PC-9 (cell line): ENCODE measurements at regions of chr11 and their contacts with region 1.

Region 1: DNA sequence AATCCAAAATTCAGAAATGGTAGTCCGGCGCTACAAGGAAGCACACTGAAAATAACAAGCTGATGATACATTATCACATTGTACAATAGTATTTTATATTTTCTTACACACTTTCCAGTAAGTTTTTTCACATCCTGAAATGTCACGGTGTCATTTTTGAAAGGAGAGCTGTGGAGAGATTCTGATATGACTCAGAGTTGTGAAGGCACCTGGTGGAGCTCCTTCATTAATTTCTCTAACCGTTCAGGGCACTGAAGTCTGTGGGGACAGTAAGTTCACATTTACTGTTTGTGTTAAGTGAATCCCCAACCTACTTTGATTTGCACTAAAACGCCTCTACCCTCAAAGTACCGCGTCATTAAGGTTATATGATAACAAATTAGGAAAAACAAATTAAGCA is 13.3 kb downstream of the LDHAL6A start:
- DNase-seq: no peak
- H3K4me3 ChIP-seq: no peak overlapping the region
- H3K27ac ChIP-seq: no peak overlapping the region
- H3K4me1 ChIP-seq: no peaks in the 10 kb centered on the region
- H3K27me3 ChIP-seq: no peaks in the 10 kb centered on the region
- CTCF ChIP-seq: no peak

Region 2: DNA sequence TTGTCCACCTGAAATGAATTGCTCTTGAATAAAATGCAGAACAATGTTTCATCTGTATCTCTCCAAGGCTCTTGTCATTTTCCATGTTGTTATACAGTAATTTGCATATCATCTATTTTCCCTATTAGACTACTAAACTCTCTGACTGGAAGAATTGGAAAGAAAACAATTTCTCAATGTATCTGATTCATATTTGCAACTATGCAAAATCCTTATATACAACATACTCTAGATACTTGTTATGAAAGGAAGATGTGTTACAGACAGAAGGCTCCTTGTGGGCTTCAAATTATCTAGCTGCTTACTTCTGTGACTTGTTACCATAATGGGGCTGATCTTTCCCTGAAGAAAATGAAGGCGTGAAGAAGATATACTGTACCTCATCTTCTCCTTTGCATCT is 446.5 kb before region 1 on chr11:
- CTCF ChIA-PET with region 1: no interaction called
- POLR2A ChIA-PET with region 1: no interaction called
- intact Hi-C with region 1: no loop called
- DNase-seq: no peak
- H3K4me3 ChIP-seq: no peak overlapping the region
- H3K27ac ChIP-seq: no peak overlapping the region
- H3K4me1 ChIP-seq: no peaks in the 10 kb centered on the region
- H3K27me3 ChIP-seq: 0 out of 2 replicates have a peak, but pooled peaks cover 4% of the 10 kb centered on the region
- CTCF ChIP-seq: no peak

Region 3: DNA sequence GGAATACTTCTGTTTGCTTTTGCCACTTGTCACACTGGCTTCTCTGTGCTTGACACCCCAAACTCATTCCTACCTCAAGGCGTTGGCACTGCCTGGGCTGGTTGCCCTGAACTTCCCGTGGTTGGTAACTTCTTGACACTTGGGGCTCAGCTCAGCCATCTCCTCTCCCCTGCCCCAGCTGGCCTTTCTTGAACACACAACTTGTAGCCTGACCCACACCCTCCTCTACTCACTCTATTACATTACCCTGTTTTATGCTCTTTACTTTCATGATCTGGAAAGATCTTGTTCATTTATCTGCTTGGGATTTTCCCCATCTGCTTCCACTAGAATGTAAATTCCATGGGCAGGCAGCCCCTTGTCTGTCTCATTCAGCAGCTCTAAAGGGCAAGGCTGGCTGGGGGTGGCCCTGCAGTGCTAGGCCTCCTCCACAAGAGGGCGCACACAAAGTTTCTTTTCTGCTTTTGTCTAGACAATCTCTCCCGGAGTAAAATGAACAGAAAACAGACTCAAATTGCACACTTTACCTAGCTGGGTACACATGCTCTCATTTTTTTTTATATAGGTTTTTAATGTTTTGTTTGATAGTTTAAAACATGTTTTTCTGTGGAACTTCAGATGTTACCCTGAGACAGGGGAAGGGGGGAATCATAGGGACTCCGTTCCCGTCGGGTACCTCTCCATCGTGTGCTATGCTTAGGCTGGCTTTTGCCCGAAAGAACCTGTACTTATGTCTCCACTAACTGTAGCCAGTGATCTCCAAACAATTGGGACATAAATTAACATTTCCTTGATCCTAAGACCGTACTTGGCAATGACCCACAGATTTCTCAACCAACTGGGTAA is 608.0 kb after region 1 on chr11:
- CTCF ChIA-PET with region 1: no interaction called
- POLR2A ChIA-PET with region 1: no interaction called
- intact Hi-C with region 1: no loop called
- DNase-seq: peak; percentile 75 to 80
- H3K4me3 ChIP-seq: no peak overlapping the region
- H3K27ac ChIP-seq: peak overlapping the region; percentile 45
- H3K4me1 ChIP-seq: peaks cover 73% of the 10 kb centered on the region
- H3K27me3 ChIP-seq: no peaks in the 10 kb centered on the region
- CTCF ChIP-seq: peak; percentile 100

Region 4: GRCh38 chr11:19602891-19603290 is 1133.9 kb after region 1 on chr11:
- CTCF ChIA-PET with region 1: interaction called, 11 read pairs
- POLR2A ChIA-PET with region 1: no interaction called
- intact Hi-C with region 1: no loop called
- DNase-seq: no peak
- H3K4me3 ChIP-seq: no peak overlapping the region
- H3K27ac ChIP-seq: no peak overlapping the region
- H3K4me1 ChIP-seq: no peaks in the 10 kb centered on the region
- H3K27me3 ChIP-seq: no peaks in the 10 kb centered on the region
- CTCF ChIP-seq: no peak